PC-3 (cell line): ENCODE measurements at regions of chr4 and their contacts with region 1.

Region 1: DNA sequence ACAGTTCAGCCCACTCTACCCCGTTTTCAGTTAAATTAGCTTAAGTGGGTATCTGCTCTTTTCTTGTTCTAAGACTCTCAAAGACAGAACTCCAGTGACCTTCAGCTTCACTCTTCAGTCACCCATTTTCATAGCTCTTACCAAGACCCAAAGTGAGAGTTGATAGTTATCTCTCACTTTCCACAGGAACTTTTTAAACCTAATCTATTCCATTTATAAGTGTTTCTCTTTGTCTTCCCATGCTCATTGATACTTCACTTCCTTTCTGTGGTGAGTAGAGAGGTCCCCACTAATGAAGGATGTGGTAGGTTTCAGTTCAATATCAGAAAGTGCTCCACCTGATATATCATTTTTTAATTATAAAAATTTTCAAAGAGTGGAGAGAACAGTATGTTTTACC is 33.4 kb downstream of the COX18 start:
- DNase-seq: no peak
- ATAC-seq: no peak
- H3K4me3 ChIP-seq: no peak overlapping the region
- H3K27ac ChIP-seq: no peak overlapping the region
- H3K4me1 ChIP-seq: no peaks in the 10 kb centered on the region
- H3K27me3 ChIP-seq: no peaks in the 10 kb centered on the region
- CTCF ChIP-seq: no peak

Region 2: GRCh38 chr4:73308286-73308685 is 272.2 kb after region 1 on chr4:
- CTCF ChIA-PET with region 1: no interaction called
- POLR2A ChIA-PET with region 1: no interaction called
- intact Hi-C with region 1: loop called (anchors 5 kb)
- DNase-seq: peak; percentile 53
- ATAC-seq: peak; percentile 69
- H3K4me3 ChIP-seq: no peak overlapping the region
- H3K27ac ChIP-seq: no peak overlapping the region
- H3K4me1 ChIP-seq: peaks cover 11% of the 10 kb centered on the region
- H3K27me3 ChIP-seq: no peaks in the 10 kb centered on the region
- CTCF ChIP-seq: peak; percentile 60; the same call in 1 of the 2 replicates